Calu3 (cell line): ENCODE measurements at regions of chr14 and their contacts with region 1.

Region 1: GRCh38 chr14:61925043-61925442 is 162.8 kb downstream of the SNAPC1 start:
- DNase-seq: peak; percentile 49
- H3K4me3 Mint-ChIP-seq: no peak overlapping the region
- H3K27ac Mint-ChIP-seq: no peak overlapping the region
- H3K4me1 Mint-ChIP-seq: peaks cover 44% of the 10 kb centered on the region
- H3K27me3 Mint-ChIP-seq: no peaks in the 10 kb centered on the region
- CTCF ChIP-seq: no peak

Region 2: DNA sequence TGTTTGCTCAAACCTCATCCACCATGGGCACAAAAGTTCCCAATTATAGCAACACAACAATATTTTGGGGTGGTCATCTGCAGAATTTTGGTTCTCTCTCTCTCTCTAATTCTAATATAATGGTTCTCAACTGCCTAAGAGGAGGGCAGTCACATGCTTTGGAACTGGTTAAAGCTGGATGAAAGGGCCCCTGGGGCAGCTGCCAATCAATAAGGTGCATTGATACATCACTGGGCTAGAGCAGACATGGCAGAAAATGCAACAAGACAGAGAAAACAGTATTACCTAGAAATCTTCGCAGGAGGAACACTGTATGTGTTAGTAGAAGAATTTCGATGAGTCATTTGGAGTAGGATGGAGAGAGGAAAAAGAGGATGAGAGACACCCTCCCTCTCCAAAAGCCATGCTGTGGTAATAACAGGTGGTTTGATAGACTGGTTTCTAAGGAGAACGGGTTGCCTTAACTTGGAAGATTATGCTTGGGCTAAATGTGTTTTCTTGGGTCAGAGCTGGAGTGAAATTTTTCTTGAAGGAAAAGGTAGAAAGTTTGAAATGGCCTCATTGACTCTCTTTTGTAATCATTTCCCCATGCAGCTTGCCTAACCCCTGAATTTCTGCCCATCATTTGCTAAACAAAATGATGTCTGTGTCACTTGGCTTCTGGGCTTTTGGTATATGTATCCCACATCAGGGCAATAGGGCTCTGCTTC is 296.9 kb before region 1 on chr14:
- CTCF ChIA-PET with region 1: no interaction called
- intact Hi-C with region 1: no loop called
- DNase-seq: no peak
- H3K4me3 Mint-ChIP-seq: no peak overlapping the region
- H3K27ac Mint-ChIP-seq: no peak overlapping the region
- H3K4me1 Mint-ChIP-seq: peaks cover 21% of the 10 kb centered on the region
- H3K27me3 Mint-ChIP-seq: no peaks in the 10 kb centered on the region
- CTCF ChIP-seq: no peak

Region 3: DNA sequence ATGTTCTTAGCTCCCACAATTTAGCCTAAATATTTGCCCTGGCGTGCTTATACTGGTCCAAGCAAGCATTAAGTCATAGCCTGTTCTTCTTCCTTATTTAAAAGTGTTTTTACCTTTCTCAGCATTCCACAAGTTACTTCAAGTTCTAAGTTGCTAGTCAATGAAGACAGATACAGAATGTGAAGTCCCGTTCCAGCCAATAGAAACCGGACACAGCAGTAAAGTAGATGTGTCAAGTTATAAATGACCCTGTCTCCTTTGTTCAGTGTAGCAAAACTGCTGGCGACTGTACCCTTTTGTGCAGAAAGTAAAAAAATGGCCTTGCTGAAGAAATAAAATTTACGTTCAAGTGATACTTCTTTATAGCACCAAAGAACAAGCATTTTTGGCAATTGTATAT is 158.9 kb before region 1 on chr14:
- CTCF ChIA-PET with region 1: no interaction called
- intact Hi-C with region 1: no loop called
- DNase-seq: no peak
- H3K4me3 Mint-ChIP-seq: peak overlapping the region; percentile 97
- H3K27ac Mint-ChIP-seq: no peak overlapping the region
- H3K4me1 Mint-ChIP-seq: peaks cover 25% of the 10 kb centered on the region
- H3K27me3 Mint-ChIP-seq: no peaks in the 10 kb centered on the region
- CTCF ChIP-seq: no peak

Region 4: DNA sequence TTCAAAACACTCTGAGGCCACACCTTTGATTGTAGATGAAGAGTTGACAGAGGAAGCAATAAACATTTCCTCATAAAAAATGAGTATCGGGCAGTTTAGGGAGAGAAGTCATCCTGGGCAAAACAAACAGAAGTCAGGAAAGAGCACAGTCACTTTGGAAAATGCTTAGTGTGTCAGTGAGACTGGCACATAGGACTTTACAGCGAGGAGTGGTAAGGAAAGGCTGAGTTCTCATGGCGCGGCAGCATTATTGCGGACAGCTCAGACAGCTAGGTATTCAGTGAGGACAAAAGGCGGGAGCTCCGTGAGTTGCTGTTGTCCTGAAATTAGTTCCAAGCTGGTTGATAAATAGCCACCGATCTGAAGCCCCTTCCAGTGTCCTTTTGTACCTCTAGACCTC is 67.1 kb after region 1 on chr14:
- CTCF ChIA-PET with region 1: no interaction called
- intact Hi-C with region 1: loop called (anchors 5 kb)
- DNase-seq: no peak
- H3K4me3 Mint-ChIP-seq: peak overlapping the region; percentile 44
- H3K27ac Mint-ChIP-seq: no peak overlapping the region
- H3K4me1 Mint-ChIP-seq: peaks cover 13% of the 10 kb centered on the region
- H3K27me3 Mint-ChIP-seq: no peaks in the 10 kb centered on the region
- CTCF ChIP-seq: no peak

Region 5: GRCh38 chr14:62030387-62030786 is 105.3 kb after region 1 on chr14:
- CTCF ChIA-PET with region 1: no interaction called
- intact Hi-C with region 1: loop called (anchors 10 kb)
- DNase-seq: no peak
- H3K4me3 Mint-ChIP-seq: no peak overlapping the region
- H3K27ac Mint-ChIP-seq: no peak overlapping the region
- H3K4me1 Mint-ChIP-seq: peaks cover 9% of the 10 kb centered on the region
- H3K27me3 Mint-ChIP-seq: no peaks in the 10 kb centered on the region
- CTCF ChIP-seq: no peak

Region 6: GRCh38 chr14:62117010-62117750 is 192.1 kb after region 1 on chr14:
- CTCF ChIA-PET with region 1: interaction called, 13 read pairs
- intact Hi-C with region 1: no loop called
- DNase-seq: peak; percentile 69
- H3K4me3 Mint-ChIP-seq: peak overlapping the region; percentile 59
- H3K27ac Mint-ChIP-seq: no peak overlapping the region
- H3K4me1 Mint-ChIP-seq: no peaks in the 10 kb centered on the region
- H3K27me3 Mint-ChIP-seq: no peaks in the 10 kb centered on the region
- CTCF ChIP-seq: no peak